ENCODE measurements at regions of chr22 and their contacts with region 1.

Region 1: DNA sequence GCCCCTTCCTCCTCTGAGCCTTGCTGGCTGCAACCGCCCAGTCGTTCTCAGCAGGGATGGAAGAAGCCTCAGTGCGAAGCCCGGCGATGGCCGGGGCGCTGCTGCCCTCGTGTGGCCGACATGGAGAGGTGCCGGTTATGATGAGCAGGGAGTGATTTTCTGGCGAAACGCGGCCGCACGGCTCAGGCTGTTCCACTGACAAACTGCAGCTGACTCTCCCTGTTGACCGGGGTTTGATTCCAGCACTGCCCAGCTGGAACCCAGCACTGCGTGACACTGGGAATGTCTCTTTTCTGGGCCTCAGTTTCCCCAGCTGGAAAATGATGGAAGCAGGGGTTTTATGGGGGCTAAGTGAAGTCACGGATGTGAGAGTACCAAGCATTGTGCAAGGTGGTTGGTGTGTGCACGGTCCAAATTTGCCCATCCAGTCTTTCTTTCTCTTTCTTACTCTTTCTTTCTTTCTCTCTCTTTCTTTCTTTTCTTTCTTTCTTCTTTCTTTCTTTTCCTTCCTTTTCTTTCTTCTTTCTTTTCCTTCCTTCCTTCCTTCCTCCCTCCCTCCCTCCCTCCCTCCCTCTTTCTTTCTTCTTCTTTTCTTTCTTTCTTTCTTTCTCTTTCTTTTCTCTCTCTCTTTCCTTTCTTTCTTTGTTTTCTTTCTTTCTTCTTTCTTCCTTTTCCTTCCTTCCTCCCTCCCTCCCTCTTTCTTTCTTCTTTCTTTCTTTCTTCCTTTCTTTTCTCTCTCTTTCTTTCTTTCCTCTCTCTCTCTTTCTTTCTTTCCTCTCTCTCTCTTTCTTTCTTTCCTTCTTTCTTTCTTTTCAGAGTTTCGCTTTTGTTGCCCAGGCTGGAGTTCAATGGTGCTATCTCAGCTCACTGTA is 25.8 kb upstream of the MPPED1 start:
- DNase-seq: peak; percentile 77 to 86 (median 80)
- H3K4me3 ChIP-seq: no peak overlapping the region
- H3K27ac ChIP-seq: no peak overlapping the region
- H3K4me1 ChIP-seq: no peaks in the 10 kb centered on the region
- H3K27me3 ChIP-seq: no peaks in the 10 kb centered on the region
- CTCF ChIP-seq: peak; percentile 86 to 91 (median 88)
- POLR2A ChIP-seq: no peak

Region 2: GRCh38 chr22:43230971-43231723 is 154.9 kb before region 1 on chr22:
- intact Hi-C with region 1: loop called (anchors 2 to 5 kb)
- DNase-seq: peak; percentile 52 to 82 (median 67)
- H3K4me3 ChIP-seq: no peak overlapping the region
- H3K27ac ChIP-seq: no peak overlapping the region
- H3K4me1 ChIP-seq: peaks cover 9 to 11% of the 10 kb centered on the region in 2 donors
- H3K27me3 ChIP-seq: no peaks in the 10 kb centered on the region
- CTCF ChIP-seq: peak; percentile 90 to 94 (median 91)
- POLR2A ChIP-seq: no peak

Region 3: DNA sequence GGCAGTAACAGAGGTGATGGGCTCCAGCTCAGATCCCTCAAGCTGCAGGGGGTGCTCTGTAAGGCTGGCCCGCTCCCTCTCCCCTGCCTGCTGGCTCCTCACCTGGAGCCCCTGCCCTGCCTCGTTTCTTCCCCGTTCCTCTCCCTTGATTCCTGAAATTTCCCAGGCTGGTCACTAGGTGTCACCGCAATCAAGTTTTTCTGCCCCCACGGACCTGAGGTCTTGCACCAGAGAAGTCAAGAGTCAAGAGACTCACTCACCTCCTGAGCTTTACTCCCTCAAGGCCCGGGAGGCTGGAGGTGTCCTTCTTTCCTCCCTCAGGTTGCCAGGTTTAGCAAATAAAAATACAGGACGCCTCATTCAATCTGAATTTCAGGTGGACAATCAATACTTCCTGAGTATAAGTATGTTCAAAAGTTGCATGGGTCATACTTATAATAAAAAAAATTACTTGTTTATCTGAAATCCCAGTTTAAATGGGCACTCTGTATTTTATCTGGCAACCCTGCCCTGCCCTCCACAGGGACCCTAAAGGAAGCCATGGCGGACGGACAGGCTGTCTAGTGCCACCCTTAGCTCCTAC is 112.0 kb before region 1 on chr22:
- intact Hi-C with region 1: loop called (anchors 2 to 10 kb)
- DNase-seq: peak; percentile 54 to 77 (median 63)
- H3K4me3 ChIP-seq: no peak overlapping the region
- H3K27ac ChIP-seq: peak overlapping the region in 2 of 5 donors; percentile 74
- H3K4me1 ChIP-seq: peaks cover 0 to 9% of the 10 kb centered on the region in 2 donors
- H3K27me3 ChIP-seq: no peaks in the 10 kb centered on the region
- CTCF ChIP-seq: peak; percentile 58 to 85 (median 77)
- POLR2A ChIP-seq: no peak

Region 4: DNA sequence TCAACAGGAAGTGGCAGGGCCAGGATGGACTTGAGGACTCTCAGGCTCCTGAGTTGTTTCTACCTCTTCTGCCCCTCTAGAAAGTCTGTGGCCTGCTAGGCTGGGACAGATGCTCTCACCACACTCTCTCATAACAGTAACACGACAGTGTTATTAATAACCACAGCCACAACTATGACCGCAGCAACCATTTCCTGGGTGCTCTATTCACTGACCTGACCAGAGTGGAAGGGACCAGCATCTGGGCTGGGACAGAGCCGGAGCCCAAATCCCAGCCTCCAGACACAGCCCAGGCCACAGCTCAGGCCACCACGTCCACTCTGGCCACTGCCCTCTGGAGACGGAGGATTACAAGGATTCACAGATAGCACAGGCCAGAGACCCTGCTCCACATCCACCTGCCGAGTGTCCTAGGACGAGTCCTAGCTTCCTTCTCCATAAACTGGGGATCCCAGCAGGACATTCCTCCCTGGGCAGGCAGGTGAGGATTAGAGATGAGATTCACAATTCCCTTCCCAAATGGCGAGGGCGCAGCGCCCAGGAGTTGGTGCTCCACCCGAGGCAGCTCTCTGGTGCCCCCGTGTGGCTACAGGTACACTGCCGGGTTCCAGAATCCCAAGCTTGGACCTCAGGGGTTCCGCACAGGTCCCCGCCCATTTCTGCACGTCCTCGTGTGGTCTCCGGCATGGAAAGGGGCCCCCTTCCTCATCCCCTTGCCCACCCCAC is 498.8 kb after region 1 on chr22:
- intact Hi-C with region 1: loop called in 1 of 2 experiments (anchors 5 kb)
- DNase-seq: peak; percentile 37 to 71 (median 63)
- H3K4me3 ChIP-seq: no peak overlapping the region
- H3K27ac ChIP-seq: no peak overlapping the region
- H3K4me1 ChIP-seq: no peaks in the 10 kb centered on the region
- H3K27me3 ChIP-seq: peaks cover 12% of the 10 kb centered on the region
- CTCF ChIP-seq: peak; percentile 47 to 77 (median 60)
- POLR2A ChIP-seq: no peak